ENCODE measurements at regions of chr5 and their contacts with region 1.

Region 1: DNA sequence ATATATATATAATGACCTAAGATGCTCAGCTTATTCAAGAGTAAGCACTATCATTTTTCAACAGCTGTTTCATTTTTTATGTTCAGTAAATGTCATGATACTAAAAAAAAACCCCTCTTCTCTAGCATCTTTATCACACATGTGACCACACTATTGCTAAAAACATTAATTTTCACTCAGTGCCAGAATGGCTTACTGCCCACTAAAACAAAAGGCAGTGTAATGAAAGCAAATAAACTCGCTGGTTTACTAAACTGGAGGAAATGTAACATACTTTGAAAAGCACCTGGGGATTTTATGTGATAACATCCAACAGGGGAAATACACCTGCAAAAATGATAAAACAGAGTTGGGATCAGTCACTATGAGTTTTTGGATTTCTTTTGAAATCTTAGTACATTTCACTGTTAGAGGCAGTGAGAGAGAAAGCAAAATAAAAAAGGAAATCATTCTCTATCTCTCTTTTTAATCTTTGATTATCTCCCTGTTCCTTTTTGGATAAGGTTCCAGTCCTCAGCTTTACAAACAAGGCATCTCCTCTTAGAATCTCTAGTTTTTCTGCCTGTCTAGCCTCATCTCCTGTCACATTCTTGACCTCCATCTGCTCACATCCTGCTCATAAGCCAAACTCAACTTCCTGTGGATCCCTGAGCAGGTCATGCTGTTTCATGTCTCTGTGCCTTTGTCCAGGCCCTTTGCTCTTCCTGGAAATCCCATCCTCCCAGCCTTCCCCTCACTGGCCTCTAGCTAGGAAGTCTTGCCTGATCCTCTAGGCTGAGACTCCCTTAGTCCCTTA is 338.0 kb downstream of the MAN2A1 start:
- DNase-seq: no peak
- H3K4me3 Mint-ChIP-seq: no peak overlapping the region
- H3K27ac Mint-ChIP-seq: peak overlapping the region; percentile 18
- H3K4me1 Mint-ChIP-seq: peaks cover 16% of the 10 kb centered on the region
- H3K27me3 Mint-ChIP-seq: no peaks in the 10 kb centered on the region

Region 2: GRCh38 chr5:109971968-109972367 is 55.8 kb before region 1 on chr5:
- CTCF ChIA-PET with region 1: no interaction called
- POLR2A ChIA-PET with region 1: no interaction called
- intact Hi-C with region 1: loop called (anchors 2 kb)
- DNase-seq: no peak
- H3K4me3 Mint-ChIP-seq: no peak overlapping the region
- H3K27ac Mint-ChIP-seq: no peak overlapping the region
- H3K4me1 Mint-ChIP-seq: peaks cover 10% of the 10 kb centered on the region
- H3K27me3 Mint-ChIP-seq: no peaks in the 10 kb centered on the region

Measured in activated CD4-positive, alpha-beta memory T cell treated with anti-CD3 and anti-CD28 coated beads for 36 hours (primary cell).